Right ventricle myocardium inferior (tissue), 1 donor: ENCODE measurements at regions of chr12 and their contacts with region 1.

Region 1: DNA sequence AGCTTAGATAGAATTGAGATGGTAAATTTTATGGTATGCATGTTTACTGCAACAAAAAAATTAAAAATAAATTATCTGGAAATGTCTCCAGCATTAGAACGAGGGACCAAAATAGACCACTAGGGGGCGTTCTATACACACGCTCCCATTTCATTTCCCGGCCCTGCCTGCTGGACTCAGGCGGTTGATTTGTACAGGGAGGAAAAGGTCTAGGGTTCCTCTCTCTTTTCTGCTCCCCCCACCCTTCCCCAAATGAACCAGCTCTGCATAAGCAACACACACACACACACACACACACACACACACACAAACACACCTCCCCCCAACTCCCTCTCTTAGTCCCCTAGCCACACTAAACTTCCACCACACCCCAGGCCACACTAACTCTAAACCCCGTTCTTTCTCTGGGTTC is 7.8 kb upstream of the DTX1 start:
- DNase-seq: no peak
- ATAC-seq: no peak

Region 2: DNA sequence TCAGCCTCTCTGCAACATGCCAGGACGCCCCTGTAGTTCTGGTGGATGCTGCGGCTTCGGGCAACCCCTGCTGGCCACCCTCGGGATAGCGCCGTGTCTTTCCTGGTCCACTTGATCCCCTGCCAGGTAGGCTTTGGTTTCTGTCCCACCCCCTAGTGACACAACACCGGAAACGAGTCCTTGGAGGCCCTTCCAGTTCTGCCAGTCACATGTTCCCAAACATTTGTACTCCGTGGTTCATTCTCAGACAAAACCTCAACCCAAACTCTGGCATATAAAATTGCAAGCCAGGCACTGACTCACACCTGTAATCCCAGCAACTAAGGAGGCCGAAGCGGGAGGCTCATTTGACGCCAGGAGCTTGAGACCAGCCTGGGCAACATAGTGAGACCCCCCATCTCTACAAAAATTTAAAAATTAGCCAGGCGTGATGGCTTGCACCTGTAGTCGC is 49.7 kb after region 1 on chr12:
- intact Hi-C with region 1: loop called (anchors 1 kb)
- DNase-seq: peak; percentile 88
- ATAC-seq: peak; percentile 85

Region 3: DNA sequence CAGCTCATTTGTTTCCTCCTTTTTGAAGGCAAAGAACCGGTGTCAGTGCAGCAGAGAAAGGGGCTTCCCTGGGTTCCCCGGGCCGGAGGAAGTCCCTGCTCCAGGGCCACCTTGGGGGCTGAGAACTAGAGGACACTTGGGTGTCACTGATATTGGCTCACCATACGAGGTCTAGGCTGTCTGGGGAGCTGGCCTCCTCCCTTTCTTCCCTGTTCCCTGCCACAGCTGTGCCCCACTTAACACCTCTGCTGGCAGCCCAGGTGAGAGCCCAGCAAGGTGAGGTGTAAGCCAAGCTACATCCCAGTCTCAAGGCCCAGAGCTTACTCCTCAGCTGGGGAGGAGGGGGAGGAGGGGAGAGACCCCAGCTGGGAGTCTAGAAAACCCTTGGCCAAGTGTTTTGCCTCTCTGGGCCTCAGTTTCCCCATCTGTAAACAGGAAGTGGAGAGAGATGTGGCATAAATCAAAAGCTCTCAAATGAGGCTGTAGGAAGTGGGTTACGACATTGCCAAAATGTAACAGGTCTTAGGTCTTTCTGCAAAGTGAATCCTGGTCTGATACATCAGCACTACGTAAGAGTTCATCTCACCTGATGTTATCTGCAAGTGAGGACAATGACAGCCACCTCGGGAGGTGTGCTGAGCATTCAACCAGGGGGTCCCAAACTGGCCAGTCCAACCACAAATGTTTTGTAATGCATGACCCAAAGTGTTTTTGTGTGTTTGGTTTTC is 61.3 kb after region 1 on chr12:
- intact Hi-C with region 1: no loop called
- DNase-seq: no peak
- ATAC-seq: no peak

Region 4: GRCh38 chr12:113152835-113153814 is 104.4 kb after region 1 on chr12:
- intact Hi-C with region 1: loop called (anchors 2 kb)
- DNase-seq: peak; percentile 79
- ATAC-seq: peak; percentile 91

Region 5: DNA sequence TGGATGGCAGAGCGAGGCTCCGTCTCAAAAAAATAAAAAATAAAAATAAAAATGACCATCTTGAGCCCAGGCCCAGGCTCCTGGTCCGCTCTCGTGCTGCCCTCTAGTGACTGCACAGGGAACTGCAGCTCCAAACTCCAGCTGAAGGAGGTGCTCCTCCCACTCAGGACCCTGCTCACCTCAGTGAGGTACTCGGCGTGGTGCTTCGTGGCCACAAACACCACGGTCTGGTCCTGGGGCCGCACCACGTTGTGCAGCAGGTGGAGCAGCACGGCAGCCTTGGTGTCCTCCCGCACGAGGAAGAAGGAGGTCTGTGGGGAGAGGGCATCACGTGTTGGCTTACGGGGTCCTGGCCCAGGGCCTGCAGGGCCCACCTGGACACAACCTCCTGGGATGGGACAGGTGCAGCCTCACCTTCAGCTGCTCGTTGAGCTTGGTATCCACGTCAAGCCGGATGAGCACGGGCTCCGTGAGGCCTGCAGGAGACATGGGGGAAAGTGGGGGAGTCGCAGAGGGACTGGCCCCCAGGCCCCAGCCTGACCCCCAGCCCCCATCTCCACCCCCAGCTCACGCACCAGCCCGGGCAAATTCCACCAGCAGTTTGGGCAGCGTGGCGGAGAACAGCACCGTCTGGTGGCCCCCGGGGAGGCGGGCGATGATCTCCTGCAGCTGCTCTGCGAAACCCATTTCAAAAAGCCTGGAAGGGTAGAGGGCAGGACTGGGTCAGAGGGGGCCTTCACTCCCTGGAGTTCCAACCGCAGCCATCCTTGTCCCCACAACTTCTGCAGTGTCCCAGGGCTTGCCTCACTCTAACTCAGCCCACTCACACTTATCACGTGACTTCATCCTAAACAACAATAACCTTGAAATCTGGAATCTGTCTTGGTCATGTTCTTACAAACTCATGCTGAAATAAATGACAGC is 126.0 kb after region 1 on chr12:
- intact Hi-C with region 1: loop called (anchors 1 kb)
- DNase-seq: peak; percentile 84
- ATAC-seq: peak; percentile 69